Gastrocnemius medialis (tissue), 4 donors: ENCODE measurements at regions of chr20 and their contacts with region 1.

Region 1: DNA sequence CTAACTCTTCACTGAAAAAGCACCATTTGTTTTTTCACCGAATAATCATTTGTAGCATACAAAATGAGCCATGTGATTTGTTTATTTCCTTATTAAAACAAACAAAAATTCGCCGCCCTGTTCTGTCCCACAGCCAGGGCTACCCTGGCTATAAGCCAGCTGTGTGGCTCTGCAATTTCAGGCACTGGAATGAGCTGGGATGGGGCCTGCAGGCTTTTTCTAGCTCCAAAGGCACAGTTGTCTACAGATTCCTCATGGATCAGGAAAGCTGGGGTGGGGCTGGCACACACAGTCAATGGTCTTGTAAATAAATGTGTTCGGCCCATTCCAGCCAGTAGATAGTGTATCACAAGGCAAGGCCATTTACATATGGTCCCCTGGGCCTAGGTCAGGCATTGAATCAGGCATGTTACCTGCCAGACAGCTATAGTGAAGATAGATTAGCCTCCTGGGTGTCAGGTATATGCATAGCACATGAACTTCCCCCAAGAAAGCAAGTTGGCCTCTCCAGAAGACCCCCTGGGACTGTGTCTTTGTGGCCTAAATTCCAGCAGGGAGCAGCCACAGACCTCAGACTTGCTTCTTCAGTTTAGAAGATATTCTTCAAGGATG is 608.9 kb downstream of the MAFB start:
- DNase-seq: no peak
- ATAC-seq: no peak
- H3K4me3 ChIP-seq: no peak overlapping the region
- H3K27ac ChIP-seq: no peak overlapping the region
- H3K4me1 ChIP-seq: peaks cover 0 to 3% of the 10 kb centered on the region in 2 donors
- H3K27me3 ChIP-seq: no peaks in the 10 kb centered on the region
- CTCF ChIP-seq: no peak
- POLR2A ChIP-seq: no peak

Region 2: GRCh38 chr20:39986173-39986904 is 93.8 kb before region 1 on chr20:
- in situ Hi-C with region 1: no loop called
- intact Hi-C with region 1: no loop called
- DNase-seq: peak; percentile 94 to 96
- ATAC-seq: peak; percentile 98
- H3K4me3 ChIP-seq: peak overlapping the region in 3 of 4 donors; percentile 14 to 33 (median 32)
- H3K27ac ChIP-seq: peak overlapping the region; percentile 94 to 99 (median 96)
- H3K4me1 ChIP-seq: peaks cover 35 to 43% of the 10 kb centered on the region in 2 donors
- H3K27me3 ChIP-seq: no peaks in the 10 kb centered on the region
- CTCF ChIP-seq: no peak
- POLR2A ChIP-seq: peak; percentile 47 to 55

Region 3: DNA sequence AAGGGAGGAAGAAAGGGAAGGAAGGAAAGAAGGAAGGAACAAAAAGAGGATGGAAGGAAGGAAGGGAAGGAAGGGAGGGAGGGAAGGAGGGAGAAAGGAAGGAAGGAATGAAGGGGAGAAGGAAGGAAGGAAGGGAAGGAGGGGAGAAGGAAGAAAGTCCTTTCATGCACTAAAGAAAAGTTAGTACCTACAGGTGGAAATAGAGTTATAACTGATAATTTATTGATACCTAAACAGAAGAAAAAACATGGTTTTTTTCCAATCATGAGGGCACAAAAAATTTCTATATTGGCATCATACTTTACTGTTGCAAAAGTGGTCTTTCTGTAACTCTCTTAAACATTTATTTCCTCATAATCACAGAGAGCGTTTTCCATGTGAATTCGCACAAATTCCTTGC is 50.6 kb before region 1 on chr20:
- in situ Hi-C with region 1: loop called in 1 of 4 experiments (anchors 10 kb)
- intact Hi-C with region 1: no loop called
- DNase-seq: no peak
- ATAC-seq: no peak
- H3K4me3 ChIP-seq: no peak overlapping the region
- H3K27ac ChIP-seq: no peak overlapping the region
- H3K4me1 ChIP-seq: no peaks in the 10 kb centered on the region
- H3K27me3 ChIP-seq: no peaks in the 10 kb centered on the region
- CTCF ChIP-seq: no peak
- POLR2A ChIP-seq: no peak